GM12878 (cell line): ENCODE measurements at regions of chr2 and their contacts with region 1.

Region 1: GRCh38 chr2:215843579-215843978 is 169.8 kb downstream of the MREG start:
- DNase-seq: no peak
- ATAC-seq: no peak
- H3K4me3 ChIP-seq: no peak overlapping the region
- H3K27ac ChIP-seq: no peak overlapping the region
- H3K4me1 ChIP-seq: peaks cover 42% of the 10 kb centered on the region
- H3K27me3 ChIP-seq: no peaks in the 10 kb centered on the region
- CTCF ChIP-seq: no peak
- EP300 ChIP-seq: no peak
- POLR2A ChIP-seq: no peak
- RAD21 ChIP-seq: no peak

Region 2: DNA sequence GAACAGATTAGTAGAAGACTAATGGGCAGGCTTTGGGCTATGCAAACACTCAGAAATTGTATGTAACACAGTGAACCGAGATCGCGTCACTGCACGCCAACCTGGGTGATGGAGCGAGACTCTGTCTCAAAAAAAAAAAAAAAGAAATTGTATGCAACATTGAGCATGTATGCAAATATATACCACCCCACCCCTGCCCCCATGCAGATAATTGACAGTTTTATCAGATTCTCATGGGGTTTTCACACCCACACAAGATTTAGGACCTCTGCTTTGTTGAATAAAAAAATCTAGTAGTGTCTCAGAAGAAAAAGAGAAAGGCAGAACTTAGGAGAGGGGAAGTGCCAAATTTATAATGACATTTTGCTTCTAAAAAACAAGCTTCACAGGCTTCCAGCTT is 276.1 kb before region 1 on chr2:
- CTCF ChIA-PET with region 1: interaction called, 3 read pairs
- POLR2A ChIA-PET with region 1: no interaction called
- RAD21 ChIA-PET with region 1: interaction called, 6 read pairs
- SMC1A ChIA-PET with region 1: interaction called, 10 read pairs
- in situ Hi-C with region 1: no loop called
- intact Hi-C with region 1: no loop called
- DNase-seq: peak; percentile 38
- ATAC-seq: peak; percentile 98
- H3K4me3 ChIP-seq: no peak overlapping the region
- H3K27ac ChIP-seq: no peak overlapping the region
- H3K4me1 ChIP-seq: no peaks in the 10 kb centered on the region
- H3K27me3 ChIP-seq: no peaks in the 10 kb centered on the region
- CTCF ChIP-seq: no peak
- EP300 ChIP-seq: peak; percentile 66 to 85
- POLR2A ChIP-seq: no peak
- RAD21 ChIP-seq: no peak

Region 3: GRCh38 chr2:215828517-215829184 is 14.9 kb before region 1 on chr2:
- CTCF ChIA-PET with region 1: interaction called, 20 read pairs
- POLR2A ChIA-PET with region 1: interaction called, 3 read pairs
- RAD21 ChIA-PET with region 1: interaction called, 10 read pairs
- SMC1A ChIA-PET with region 1: interaction called, 43 read pairs
- in situ Hi-C with region 1: no loop called
- intact Hi-C with region 1: no loop called
- DNase-seq: no peak
- ATAC-seq: peak; percentile 80
- H3K4me3 ChIP-seq: no peak overlapping the region
- H3K27ac ChIP-seq: no peak overlapping the region
- H3K4me1 ChIP-seq: peaks cover 5% of the 10 kb centered on the region
- H3K27me3 ChIP-seq: no peaks in the 10 kb centered on the region
- CTCF ChIP-seq: peak; percentile 54 to 73 (median 68)
- EP300 ChIP-seq: no peak
- POLR2A ChIP-seq: no peak
- RAD21 ChIP-seq: peak; percentile 80

Region 4: GRCh38 chr2:215880970-215881369 is 37.4 kb after region 1 on chr2:
- CTCF ChIA-PET with region 1: interaction called, 5 read pairs
- POLR2A ChIA-PET with region 1: interaction called, 10 read pairs
- RAD21 ChIA-PET with region 1: interaction called, 28 read pairs
- SMC1A ChIA-PET with region 1: interaction called, 23 read pairs
- in situ Hi-C with region 1: no loop called
- intact Hi-C with region 1: no loop called
- DNase-seq: peak; percentile 38
- ATAC-seq: peak; percentile 82
- H3K4me3 ChIP-seq: no peak overlapping the region
- H3K27ac ChIP-seq: no peak overlapping the region
- H3K4me1 ChIP-seq: peaks cover 15% of the 10 kb centered on the region
- H3K27me3 ChIP-seq: no peaks in the 10 kb centered on the region
- CTCF ChIP-seq: no peak
- EP300 ChIP-seq: no peak
- POLR2A ChIP-seq: no peak
- RAD21 ChIP-seq: no peak

Region 5: DNA sequence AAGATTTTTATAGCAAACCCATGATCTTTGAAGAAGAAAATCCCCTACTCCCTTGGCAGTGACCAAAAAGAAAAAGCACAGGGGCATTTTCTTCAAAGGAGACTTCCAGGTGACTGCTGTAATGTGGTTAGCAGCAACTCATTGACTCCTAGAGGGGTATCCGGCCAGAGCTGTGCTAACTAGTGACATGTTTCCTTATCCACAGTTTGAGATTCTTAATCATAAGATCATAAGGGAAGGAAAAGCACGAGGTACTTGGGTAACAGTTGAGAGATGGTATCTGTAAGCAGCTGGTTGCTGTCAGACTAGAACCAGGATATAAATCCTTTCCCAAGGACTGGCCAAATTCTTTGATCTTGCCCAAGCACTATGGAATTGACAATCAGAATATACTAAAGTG is 45.1 kb after region 1 on chr2:
- CTCF ChIA-PET with region 1: interaction called, 7 read pairs
- POLR2A ChIA-PET with region 1: interaction called, 6 read pairs
- RAD21 ChIA-PET with region 1: interaction called, 6 read pairs
- SMC1A ChIA-PET with region 1: interaction called, 14 read pairs
- in situ Hi-C with region 1: no loop called
- intact Hi-C with region 1: no loop called
- DNase-seq: no peak
- ATAC-seq: peak; percentile 63
- H3K4me3 ChIP-seq: no peak overlapping the region
- H3K27ac ChIP-seq: no peak overlapping the region
- H3K4me1 ChIP-seq: peaks cover 5% of the 10 kb centered on the region
- H3K27me3 ChIP-seq: no peaks in the 10 kb centered on the region
- CTCF ChIP-seq: no peak
- EP300 ChIP-seq: no peak
- POLR2A ChIP-seq: no peak
- RAD21 ChIP-seq: no peak

Region 6: GRCh38 chr2:216159144-216159543 is 315.6 kb after region 1 on chr2:
- CTCF ChIA-PET with region 1: no interaction called
- POLR2A ChIA-PET with region 1: no interaction called
- RAD21 ChIA-PET with region 1: no interaction called
- SMC1A ChIA-PET with region 1: no interaction called
- in situ Hi-C with region 1: no loop called
- intact Hi-C with region 1: no loop called
- DNase-seq: no peak
- ATAC-seq: no peak
- H3K4me3 ChIP-seq: no peak overlapping the region
- H3K27ac ChIP-seq: no peak overlapping the region
- H3K4me1 ChIP-seq: no peaks in the 10 kb centered on the region
- H3K27me3 ChIP-seq: no peaks in the 10 kb centered on the region
- CTCF ChIP-seq: no peak
- EP300 ChIP-seq: no peak
- POLR2A ChIP-seq: no peak
- RAD21 ChIP-seq: no peak

Region 7: DNA sequence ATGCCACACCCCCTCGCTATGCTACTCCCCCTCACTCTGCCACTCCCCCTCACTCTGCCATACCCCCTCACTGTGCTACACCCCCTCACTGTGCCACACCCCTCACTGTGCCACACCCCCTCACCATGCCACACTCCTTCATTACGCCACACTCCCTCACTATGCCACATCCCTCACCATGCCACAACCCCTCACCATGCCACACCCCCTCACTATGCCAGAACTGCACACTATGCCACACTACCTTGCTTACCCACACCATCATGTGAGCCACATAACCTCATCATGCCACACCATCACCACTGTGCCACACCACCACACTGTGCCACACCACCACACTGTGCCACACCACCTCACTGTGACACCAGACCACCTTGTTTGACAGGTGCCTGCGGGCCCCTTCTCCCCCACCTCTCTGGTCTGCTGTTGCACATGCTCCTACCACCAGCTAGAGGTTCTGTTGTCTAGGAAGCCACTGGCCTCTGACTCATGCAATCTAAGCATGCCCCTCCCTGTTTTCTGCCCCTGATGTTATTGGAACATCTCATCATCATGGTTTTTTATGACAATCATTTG is 506.7 kb after region 1 on chr2:
- CTCF ChIA-PET with region 1: no interaction called
- POLR2A ChIA-PET with region 1: interaction called, 11 read pairs
- RAD21 ChIA-PET with region 1: no interaction called
- SMC1A ChIA-PET with region 1: no interaction called
- in situ Hi-C with region 1: no loop called
- intact Hi-C with region 1: no loop called
- DNase-seq: no peak
- ATAC-seq: no peak
- H3K4me3 ChIP-seq: no peak overlapping the region
- H3K27ac ChIP-seq: no peak overlapping the region
- H3K4me1 ChIP-seq: no peaks in the 10 kb centered on the region; the same call in 1 of the 2 replicates
- H3K27me3 ChIP-seq: no peaks in the 10 kb centered on the region
- CTCF ChIP-seq: no peak
- EP300 ChIP-seq: no peak
- POLR2A ChIP-seq: no peak
- RAD21 ChIP-seq: no peak